Ovary (tissue), 10 donors: ENCODE measurements at regions of chr5 and their contacts with region 1.

Region 1: GRCh38 chr5:138491669-138492559 is 26.6 kb downstream of the EGR1 start:
- DNase-seq: peak; percentile 93 to 96 (median 95)
- H3K4me3 ChIP-seq: peak overlapping the region; percentile 51
- H3K27ac ChIP-seq: peak overlapping the region; percentile 9 to 71
- H3K4me1 ChIP-seq: peaks cover 15% of the 10 kb centered on the region
- H3K27me3 ChIP-seq: no peaks in the 10 kb centered on the region
- CTCF ChIP-seq: no peak
- EP300 ChIP-seq: no peak
- POLR2A ChIP-seq: peak; percentile 69

Region 2: GRCh38 chr5:137754126-137754960 is 737.6 kb before region 1 on chr5 and contains the start of gene HNRNPA0:
- intact Hi-C with region 1: loop called in 1 of 4 experiments (anchors 10 kb)
- DNase-seq: peak; percentile 96 to 98 (median 97)
- H3K4me3 ChIP-seq: peak within 1 kb of the TSS; percentile 91
- H3K27ac ChIP-seq: peak within 1 kb of the TSS; percentile 97
- H3K4me1 ChIP-seq: no peaks in the 10 kb centered on the region
- H3K27me3 ChIP-seq: no peaks in the 10 kb centered on the region
- CTCF ChIP-seq: peak; percentile 6 to 26 (median 25)
- EP300 ChIP-seq: peak; percentile 8
- POLR2A ChIP-seq: peak; percentile 98
- total RNA-seq, gene HNRNPA0: 16.9 to 52.9 (median 48.3) TPM

Region 3: GRCh38 chr5:138464008-138464387 is 27.9 kb before region 1 on chr5:
- intact Hi-C with region 1: loop called in 1 of 4 experiments (anchors 2 kb)
- DNase-seq: peak; percentile 96 to 99 (median 98)
- H3K4me3 ChIP-seq: peak overlapping the region; percentile 50
- H3K27ac ChIP-seq: peak overlapping the region; percentile 93 to 95
- H3K4me1 ChIP-seq: peaks cover 19% of the 10 kb centered on the region
- H3K27me3 ChIP-seq: no peaks in the 10 kb centered on the region
- CTCF ChIP-seq: peak; percentile 97 to 98 (median 97)
- EP300 ChIP-seq: no peak
- POLR2A ChIP-seq: peak; percentile 82